ENCODE measurements at regions of chr12 and their contacts with region 1.

Region 1: DNA sequence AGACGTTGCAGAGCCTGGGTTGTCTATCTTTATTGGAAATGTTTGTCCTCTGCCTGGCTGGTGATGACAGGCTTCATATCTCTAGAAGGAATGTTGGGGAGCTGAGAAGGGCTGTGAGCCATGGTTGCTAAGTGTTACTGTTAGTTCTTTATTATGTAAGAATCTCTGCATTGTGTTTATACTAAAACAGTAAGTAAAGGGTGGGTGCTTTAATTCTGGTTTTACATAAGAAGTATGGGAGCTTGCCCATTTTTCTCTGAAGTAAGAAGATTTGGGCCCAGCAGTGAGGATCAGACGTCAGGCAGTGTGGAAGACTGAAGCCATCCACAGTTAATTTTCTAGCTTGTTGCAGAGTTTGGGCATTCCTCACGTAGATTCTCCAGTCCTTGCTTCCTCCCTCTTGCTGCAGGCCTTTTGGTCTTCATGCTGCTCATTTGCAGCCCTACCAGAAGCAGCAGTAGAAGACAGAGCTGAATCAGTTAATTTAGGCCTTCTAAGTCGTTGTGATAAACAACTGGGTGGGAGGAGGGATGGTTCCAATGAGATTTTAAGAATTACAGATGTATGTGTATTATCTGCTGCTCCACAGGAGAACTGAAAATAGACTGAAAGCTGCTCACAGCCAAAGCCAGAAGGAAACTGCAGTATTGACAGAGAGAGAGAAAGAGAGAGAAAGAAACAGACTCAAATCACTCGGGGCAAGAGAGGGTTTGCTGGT is 21.4 kb downstream of the WNT5B start:
- DNase-seq: no peak
- ATAC-seq: no peak
- H3K4me3 ChIP-seq: no peak overlapping the region
- H3K27ac ChIP-seq: no peak overlapping the region
- H3K4me1 ChIP-seq: no peaks in the 10 kb centered on the region
- CTCF ChIP-seq: no peak
- EP300 ChIP-seq: no peak
- POLR2A ChIP-seq: no peak
- RAD21 ChIP-seq: no peak

Region 2: GRCh38 chr12:1661553-1662335 is 11.3 kb after region 1 on chr12:
- CTCF ChIA-PET with region 1: interaction called, 14 read pairs
- POLR2A ChIA-PET with region 1: interaction called, 4 read pairs
- DNase-seq: peak; percentile 83 to 91
- ATAC-seq: peak; percentile 91 to 92
- H3K4me3 ChIP-seq: peak overlapping the region; percentile 45
- H3K27ac ChIP-seq: peak overlapping the region; percentile 60 to 94
- H3K4me1 ChIP-seq: peaks cover 21% of the 10 kb centered on the region; the same call in 2 of the 3 replicates
- CTCF ChIP-seq: no peak
- EP300 ChIP-seq: no peak
- POLR2A ChIP-seq: peak; percentile 68
- RAD21 ChIP-seq: no peak

Region 3: GRCh38 chr12:1680804-1681492 is 30.5 kb after region 1 on chr12:
- CTCF ChIA-PET with region 1: interaction called, 13 read pairs
- POLR2A ChIA-PET with region 1: no interaction called
- DNase-seq: no peak
- ATAC-seq: no peak
- H3K4me3 ChIP-seq: no peak overlapping the region
- H3K27ac ChIP-seq: no peak overlapping the region
- H3K4me1 ChIP-seq: no peaks in the 10 kb centered on the region
- CTCF ChIP-seq: no peak
- EP300 ChIP-seq: no peak
- POLR2A ChIP-seq: no peak
- RAD21 ChIP-seq: no peak

Region 4: GRCh38 chr12:1698638-1699214 is 48.3 kb after region 1 on chr12:
- CTCF ChIA-PET with region 1: interaction called, 29 read pairs
- POLR2A ChIA-PET with region 1: no interaction called
- DNase-seq: no peak
- ATAC-seq: no peak
- H3K4me3 ChIP-seq: no peak overlapping the region
- H3K27ac ChIP-seq: no peak overlapping the region
- H3K4me1 ChIP-seq: peaks cover 6% of the 10 kb centered on the region; the same call in 2 of the 3 replicates
- CTCF ChIP-seq: no peak
- EP300 ChIP-seq: no peak
- POLR2A ChIP-seq: no peak
- RAD21 ChIP-seq: 0 out of 5 replicates have a peak, but pooled peaks of 1 of the 2 experiments have one; percentile 20

Region 5: DNA sequence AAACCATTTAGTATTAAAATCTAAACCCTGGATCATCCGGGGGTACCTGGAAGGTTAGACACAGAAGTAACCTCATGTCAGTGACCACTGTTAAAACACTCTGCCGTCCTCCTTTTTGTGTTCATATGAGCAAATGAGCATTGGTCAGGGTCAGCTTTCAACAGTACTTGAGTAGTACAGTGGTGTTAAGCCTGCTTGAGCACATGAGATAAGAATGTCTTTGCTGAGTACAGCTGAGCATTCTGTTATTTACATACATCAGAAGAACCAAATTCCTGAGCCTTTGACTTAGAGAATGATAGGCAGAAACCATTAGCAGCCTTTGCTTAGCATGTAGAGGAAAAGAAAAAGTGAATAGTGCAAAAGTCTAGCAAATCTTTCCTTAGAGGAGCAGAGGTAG is 131.4 kb after region 1 on chr12:
- CTCF ChIA-PET with region 1: interaction called, 68 read pairs
- POLR2A ChIA-PET with region 1: no interaction called
- DNase-seq: no peak
- ATAC-seq: no peak
- H3K4me3 ChIP-seq: no peak overlapping the region
- H3K27ac ChIP-seq: no peak overlapping the region
- H3K4me1 ChIP-seq: peaks cover 13% of the 10 kb centered on the region
- CTCF ChIP-seq: no peak
- EP300 ChIP-seq: no peak
- POLR2A ChIP-seq: no peak
- RAD21 ChIP-seq: no peak

Measured in A549 (cell line).